ENCODE measurements at regions of chr9 and their contacts with region 1.

Region 1: GRCh38 chr9:2132484-2133082 is 117.4 kb downstream of the SMARCA2 start:
- DNase-seq: no peak
- ATAC-seq: peak in 1 of 2 donors; percentile 43
- H3K4me3 ChIP-seq: no peak overlapping the region
- H3K27ac ChIP-seq: no peak overlapping the region
- H3K4me1 ChIP-seq: peaks cover 3% of the 10 kb centered on the region
- H3K27me3 ChIP-seq: no peaks in the 10 kb centered on the region

Region 2: DNA sequence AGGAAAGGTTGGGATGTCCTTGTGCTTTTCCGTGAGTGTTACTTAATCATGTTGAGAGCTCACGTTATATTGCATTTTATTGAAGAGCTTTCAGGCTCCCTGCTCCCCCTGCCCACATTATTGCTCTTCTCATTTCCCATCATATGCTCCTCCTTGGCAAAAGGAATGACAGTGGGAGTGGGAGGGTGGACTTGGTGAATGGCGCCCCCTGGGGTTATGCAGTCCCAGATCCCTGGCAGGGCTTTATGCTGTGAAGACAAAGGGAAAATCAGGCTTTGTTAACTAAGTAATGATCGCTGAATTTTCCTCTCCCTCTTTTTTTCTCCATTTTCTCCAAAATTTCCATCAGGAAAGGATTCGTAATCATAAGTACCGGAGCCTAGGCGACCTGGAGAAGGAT is 49.2 kb after region 1 on chr9:
- intact Hi-C with region 1: loop called in 2 of 4 experiments (anchors 5 to 10 kb)
- DNase-seq: peak in 1 of 3 donors; percentile 28
- ATAC-seq: peak in 1 of 2 donors; percentile 63
- H3K4me3 ChIP-seq: no peak overlapping the region
- H3K27ac ChIP-seq: no peak overlapping the region
- H3K4me1 ChIP-seq: no peaks in the 10 kb centered on the region
- H3K27me3 ChIP-seq: no peaks in the 10 kb centered on the region

Region 3: GRCh38 chr9:2809691-2810433 is 677.3 kb after region 1 on chr9:
- intact Hi-C with region 1: loop called in 1 of 4 experiments (anchors 10 kb)
- DNase-seq: no peak
- ATAC-seq: peak; percentile 84 to 91
- H3K4me3 ChIP-seq: no peak overlapping the region
- H3K27ac ChIP-seq: no peak overlapping the region
- H3K4me1 ChIP-seq: peaks cover 3% of the 10 kb centered on the region
- H3K27me3 ChIP-seq: no peaks in the 10 kb centered on the region

Region 4: GRCh38 chr9:2837915-2838314 is 705.3 kb after region 1 on chr9:
- intact Hi-C with region 1: loop called in 2 of 4 experiments (anchors 10 kb)
- DNase-seq: no peak
- ATAC-seq: peak in 1 of 2 donors; percentile 70
- H3K4me3 ChIP-seq: peak overlapping the region; percentile 44
- H3K27ac ChIP-seq: no peak overlapping the region
- H3K4me1 ChIP-seq: peaks cover 2% of the 10 kb centered on the region
- H3K27me3 ChIP-seq: no peaks in the 10 kb centered on the region

Measured in right cardiac atrium (tissue), 5 donors.